IMR-90 (cell line): ENCODE measurements at regions of chr1 and their contacts with region 1.

Region 1: DNA sequence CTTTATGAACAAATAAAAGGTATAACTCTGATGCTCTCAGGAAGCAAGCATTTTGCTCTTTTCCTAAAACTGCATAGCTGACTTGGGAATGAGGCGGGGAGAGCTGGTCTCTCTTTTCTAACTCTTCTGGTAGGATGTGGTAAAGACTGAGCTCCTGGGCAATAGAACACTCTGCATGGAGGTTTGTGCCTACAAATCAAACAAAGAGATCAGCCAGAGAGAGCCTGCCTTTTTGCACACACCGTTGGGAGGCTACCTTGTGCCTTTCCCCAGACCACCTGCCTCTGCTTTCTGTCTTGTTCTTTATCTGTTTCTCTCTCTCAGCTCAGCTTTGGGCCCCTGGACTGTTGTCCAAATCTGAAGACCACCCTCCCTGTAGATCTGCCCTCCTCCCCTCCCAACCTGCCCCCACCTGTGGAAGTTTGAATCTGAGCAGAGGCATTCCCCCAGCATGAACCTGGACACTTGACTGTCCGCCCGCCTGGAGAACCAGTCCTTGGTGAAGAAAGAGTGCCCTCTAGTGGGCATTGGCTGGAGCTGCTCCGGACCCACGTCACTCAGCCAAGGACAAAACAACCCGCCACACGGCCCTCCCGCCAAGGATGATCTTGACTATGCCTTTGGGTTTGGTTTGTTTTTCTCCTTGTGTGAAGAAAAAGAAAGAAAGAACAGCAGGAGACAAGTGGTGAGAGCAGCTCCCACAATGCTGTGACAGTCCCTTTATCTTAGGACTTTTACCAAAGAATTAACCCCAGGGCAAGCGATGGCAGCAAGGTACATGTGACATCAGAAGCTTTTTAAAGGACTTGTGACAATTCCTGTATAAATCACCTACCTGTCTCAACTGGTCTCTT is 228.2 kb downstream of the PBX1 start:
- DNase-seq: peak; percentile 75
- ATAC-seq: peak; percentile 92
- H3K4me3 ChIP-seq: no peak overlapping the region
- H3K27ac ChIP-seq: no peak overlapping the region
- H3K4me1 ChIP-seq: peaks cover 6% of the 10 kb centered on the region; the same call in 1 of the 2 replicates
- H3K27me3 ChIP-seq: no peaks in the 10 kb centered on the region
- CTCF ChIP-seq: peak; percentile 94
- POLR2A ChIP-seq: no peak
- RAD21 ChIP-seq: peak; percentile 99

Region 2: DNA sequence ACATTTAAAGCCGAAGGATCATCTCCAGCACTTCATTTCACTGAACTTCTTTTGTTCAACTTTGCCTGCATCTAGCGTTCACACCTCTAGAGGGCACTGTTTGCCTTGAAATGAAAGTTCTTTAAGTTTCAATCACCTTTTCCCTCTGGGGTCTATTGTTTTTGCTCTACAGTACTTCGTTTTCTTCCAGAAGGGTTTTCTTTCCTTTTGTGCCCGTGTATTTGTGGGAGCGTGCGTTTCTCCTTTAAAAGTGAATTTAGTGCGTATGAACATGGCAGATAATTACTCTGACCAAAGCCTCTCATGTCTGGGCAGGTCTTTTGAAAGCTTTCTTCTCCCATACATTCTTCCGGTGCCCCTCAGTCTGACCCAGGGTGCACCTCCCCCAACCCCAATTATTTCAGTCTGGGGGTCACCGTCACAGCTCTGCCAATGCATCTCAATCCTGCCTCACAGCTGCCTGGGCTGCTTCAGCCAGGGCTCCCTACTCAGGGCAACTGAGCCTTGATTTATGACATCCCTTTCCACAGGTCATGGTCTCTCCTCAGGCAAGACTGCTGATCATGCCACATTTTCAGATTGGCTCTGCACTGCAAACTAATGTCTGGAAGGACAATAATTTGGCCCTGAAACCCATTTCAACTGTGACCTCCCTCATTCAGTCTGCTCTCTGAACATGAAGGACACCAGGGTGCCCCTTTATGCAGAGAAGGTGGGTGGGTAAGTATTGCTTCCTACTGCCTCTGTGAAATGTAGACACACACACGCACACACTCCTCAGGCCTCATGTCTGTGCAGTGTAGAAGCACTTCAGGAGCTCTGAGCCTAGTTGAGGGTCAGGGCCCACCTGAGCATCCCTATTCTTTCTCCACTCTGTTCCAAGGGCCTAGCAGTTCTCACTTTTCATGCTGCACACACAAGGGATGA is 1376.9 kb before region 1 on chr1:
- CTCF ChIA-PET with region 1: no interaction called
- POLR2A ChIA-PET with region 1: no interaction called
- dilution Hi-C with region 1: no loop called
- in situ Hi-C with region 1: no loop called
- intact Hi-C with region 1: loop called (anchors 5 kb)
- DNase-seq: peak; percentile 56
- ATAC-seq: peak; percentile 81
- H3K4me3 ChIP-seq: no peak overlapping the region
- H3K27ac ChIP-seq: no peak overlapping the region
- H3K4me1 ChIP-seq: no peaks in the 10 kb centered on the region
- H3K27me3 ChIP-seq: peaks cover 5% of the 10 kb centered on the region
- CTCF ChIP-seq: peak; percentile 75
- POLR2A ChIP-seq: no peak
- RAD21 ChIP-seq: peak; percentile 72

Region 3: GRCh38 chr1:164440232-164440631 is 347.0 kb before region 1 on chr1:
- CTCF ChIA-PET with region 1: interaction called, 3 read pairs
- POLR2A ChIA-PET with region 1: no interaction called
- dilution Hi-C with region 1: no loop called
- in situ Hi-C with region 1: no loop called
- intact Hi-C with region 1: loop called (anchors 5 kb)
- DNase-seq: no peak
- ATAC-seq: peak; percentile 80
- H3K4me3 ChIP-seq: no peak overlapping the region
- H3K27ac ChIP-seq: no peak overlapping the region
- H3K4me1 ChIP-seq: no peaks in the 10 kb centered on the region
- H3K27me3 ChIP-seq: no peaks in the 10 kb centered on the region; the same call in 1 of the 2 replicates
- CTCF ChIP-seq: peak; percentile 31; the same call in 1 of the 2 replicates
- POLR2A ChIP-seq: no peak
- RAD21 ChIP-seq: peak; percentile 40

Region 4: GRCh38 chr1:164558461-164559341 is 228.5 kb before region 1 on chr1 and contains the start of gene PBX1:
- CTCF ChIA-PET with region 1: no interaction called
- POLR2A ChIA-PET with region 1: no interaction called
- dilution Hi-C with region 1: no loop called
- in situ Hi-C with region 1: loop called (anchors 10 kb)
- intact Hi-C with region 1: loop called (anchors 1 kb)
- DNase-seq: peak; percentile 98
- ATAC-seq: peak; percentile 98
- H3K4me3 ChIP-seq: peak within 1 kb of the TSS; percentile 75
- H3K27ac ChIP-seq: peak within 1 kb of the TSS; percentile 99
- H3K4me1 ChIP-seq: no peaks in the 10 kb centered on the region
- H3K27me3 ChIP-seq: no peaks in the 10 kb centered on the region
- CTCF ChIP-seq: no peak
- POLR2A ChIP-seq: peak; percentile 88
- RAD21 ChIP-seq: no peak; the same call in 1 of the 2 replicates
- total RNA-seq, gene PBX1: 17.5 and 17.9 TPM in 2 replicates

Region 5: DNA sequence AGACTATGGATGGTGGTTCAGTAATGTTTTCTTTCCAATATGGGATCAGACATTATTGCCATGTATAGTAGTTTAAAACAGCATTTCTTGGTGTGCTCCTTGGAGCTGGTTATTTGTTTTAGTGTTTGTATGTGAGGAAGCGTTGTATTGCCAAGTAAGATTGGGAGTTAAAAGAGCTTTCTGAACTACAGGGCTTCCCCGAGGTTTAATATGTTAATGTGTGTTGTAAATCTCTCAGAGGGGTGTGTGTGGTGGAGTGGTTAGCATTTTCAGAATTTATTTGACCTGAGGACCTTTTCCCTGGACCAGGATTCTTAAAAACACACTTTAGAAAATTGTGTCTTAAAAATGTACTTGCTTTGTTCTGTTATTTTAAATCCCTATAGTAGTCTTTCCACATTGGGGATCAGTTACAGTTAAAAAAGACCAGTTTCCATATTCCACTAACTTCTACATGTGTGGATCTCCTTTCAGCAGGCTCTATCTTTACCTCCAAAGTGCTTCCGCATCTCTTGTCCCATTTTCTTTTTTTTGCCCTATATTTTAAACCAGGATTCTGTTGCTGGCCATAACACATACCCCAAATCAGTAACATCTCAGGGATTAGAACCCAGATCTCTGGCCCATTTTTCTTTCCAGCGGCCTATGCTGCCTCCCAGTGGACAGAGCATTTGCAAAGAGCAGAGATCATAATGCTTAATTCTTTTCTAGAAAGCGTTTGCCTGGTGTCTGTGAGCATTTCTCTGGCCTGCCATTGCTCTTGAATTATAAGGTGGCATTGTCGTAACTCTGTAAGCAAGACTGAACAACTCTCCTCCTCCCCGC is 169.6 kb before region 1 on chr1:
- CTCF ChIA-PET with region 1: interaction called, 8 read pairs
- POLR2A ChIA-PET with region 1: no interaction called
- dilution Hi-C with region 1: no loop called
- in situ Hi-C with region 1: loop called (anchors 10 kb)
- intact Hi-C with region 1: loop called (anchors 5 kb)
- DNase-seq: peak; percentile 42
- ATAC-seq: peak; percentile 72
- H3K4me3 ChIP-seq: no peak overlapping the region
- H3K27ac ChIP-seq: no peak overlapping the region
- H3K4me1 ChIP-seq: peaks cover 13% of the 10 kb centered on the region; the same call in 1 of the 2 replicates
- H3K27me3 ChIP-seq: no peaks in the 10 kb centered on the region
- CTCF ChIP-seq: peak; percentile 63
- POLR2A ChIP-seq: no peak
- RAD21 ChIP-seq: peak; percentile 86

Region 6: DNA sequence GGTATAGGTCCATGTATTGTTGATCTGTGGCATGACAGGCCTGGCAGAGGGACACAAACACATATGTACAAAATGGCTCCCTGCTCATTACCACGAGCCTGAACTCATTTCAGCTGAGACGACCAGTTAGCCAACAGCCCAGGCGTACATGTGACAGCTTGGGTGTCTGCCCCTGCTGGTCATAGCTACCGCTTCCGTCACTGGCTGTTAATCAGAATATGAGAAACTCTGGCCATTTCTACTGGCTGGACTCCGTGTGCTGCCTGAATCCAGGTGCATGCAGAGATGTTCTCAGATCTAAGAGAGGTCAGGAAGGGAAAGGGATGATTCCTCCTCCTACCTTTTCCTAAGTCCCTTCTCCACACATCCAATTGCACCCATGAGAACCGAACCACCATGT is 83.7 kb before region 1 on chr1:
- CTCF ChIA-PET with region 1: no interaction called
- POLR2A ChIA-PET with region 1: no interaction called
- dilution Hi-C with region 1: no loop called
- in situ Hi-C with region 1: no loop called
- intact Hi-C with region 1: no loop called
- DNase-seq: no peak
- ATAC-seq: no peak
- H3K4me3 ChIP-seq: no peak overlapping the region
- H3K27ac ChIP-seq: no peak overlapping the region
- H3K4me1 ChIP-seq: peaks cover 23% of the 10 kb centered on the region
- H3K27me3 ChIP-seq: no peaks in the 10 kb centered on the region
- CTCF ChIP-seq: no peak
- POLR2A ChIP-seq: no peak
- RAD21 ChIP-seq: no peak

Region 7: DNA sequence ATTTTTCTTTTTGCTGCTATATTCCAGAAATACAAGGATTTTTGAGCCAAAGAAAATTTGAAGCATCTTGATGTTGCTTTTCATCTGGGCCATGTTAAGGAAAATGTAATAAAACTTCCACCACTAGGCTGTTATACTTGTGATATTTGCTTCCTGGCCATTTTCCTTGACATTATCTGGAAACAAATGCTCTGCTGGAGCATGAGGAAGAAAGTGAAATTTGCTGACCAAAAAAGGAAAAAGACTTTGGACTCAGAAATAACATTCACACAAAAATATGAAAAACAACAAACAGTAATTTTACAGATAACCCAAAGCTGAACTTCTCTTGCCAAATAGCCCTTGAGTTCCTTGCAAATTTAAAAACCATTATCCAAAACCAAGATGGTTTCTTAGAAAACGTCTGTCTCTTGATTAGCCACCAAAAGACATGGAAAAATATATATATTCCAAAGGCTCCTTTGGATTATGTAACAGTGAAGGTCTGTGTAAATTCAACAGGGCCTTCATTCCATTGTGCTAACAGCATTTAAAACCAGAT is 224.9 kb after region 1 on chr1:
- CTCF ChIA-PET with region 1: no interaction called
- POLR2A ChIA-PET with region 1: no interaction called
- dilution Hi-C with region 1: no loop called
- in situ Hi-C with region 1: no loop called
- intact Hi-C with region 1: no loop called
- DNase-seq: no peak
- ATAC-seq: no peak
- H3K4me3 ChIP-seq: no peak overlapping the region
- H3K27ac ChIP-seq: no peak overlapping the region
- H3K4me1 ChIP-seq: no peaks in the 10 kb centered on the region
- H3K27me3 ChIP-seq: no peaks in the 10 kb centered on the region
- CTCF ChIP-seq: no peak
- POLR2A ChIP-seq: no peak
- RAD21 ChIP-seq: no peak

Region 8: GRCh38 chr1:165073185-165074007 is 286.2 kb after region 1 on chr1:
- CTCF ChIA-PET with region 1: no interaction called
- POLR2A ChIA-PET with region 1: no interaction called
- dilution Hi-C with region 1: no loop called
- in situ Hi-C with region 1: no loop called
- intact Hi-C with region 1: loop called (anchors 5 kb)
- DNase-seq: peak; percentile 56
- ATAC-seq: peak; percentile 96
- H3K4me3 ChIP-seq: no peak overlapping the region
- H3K27ac ChIP-seq: no peak overlapping the region
- H3K4me1 ChIP-seq: no peaks in the 10 kb centered on the region
- H3K27me3 ChIP-seq: no peaks in the 10 kb centered on the region; the same call in 1 of the 2 replicates
- CTCF ChIP-seq: peak; percentile 80
- POLR2A ChIP-seq: no peak
- RAD21 ChIP-seq: peak; percentile 87